H1 (cell line): ENCODE measurements at regions of chr6 and their contacts with region 1.

Region 1: DNA sequence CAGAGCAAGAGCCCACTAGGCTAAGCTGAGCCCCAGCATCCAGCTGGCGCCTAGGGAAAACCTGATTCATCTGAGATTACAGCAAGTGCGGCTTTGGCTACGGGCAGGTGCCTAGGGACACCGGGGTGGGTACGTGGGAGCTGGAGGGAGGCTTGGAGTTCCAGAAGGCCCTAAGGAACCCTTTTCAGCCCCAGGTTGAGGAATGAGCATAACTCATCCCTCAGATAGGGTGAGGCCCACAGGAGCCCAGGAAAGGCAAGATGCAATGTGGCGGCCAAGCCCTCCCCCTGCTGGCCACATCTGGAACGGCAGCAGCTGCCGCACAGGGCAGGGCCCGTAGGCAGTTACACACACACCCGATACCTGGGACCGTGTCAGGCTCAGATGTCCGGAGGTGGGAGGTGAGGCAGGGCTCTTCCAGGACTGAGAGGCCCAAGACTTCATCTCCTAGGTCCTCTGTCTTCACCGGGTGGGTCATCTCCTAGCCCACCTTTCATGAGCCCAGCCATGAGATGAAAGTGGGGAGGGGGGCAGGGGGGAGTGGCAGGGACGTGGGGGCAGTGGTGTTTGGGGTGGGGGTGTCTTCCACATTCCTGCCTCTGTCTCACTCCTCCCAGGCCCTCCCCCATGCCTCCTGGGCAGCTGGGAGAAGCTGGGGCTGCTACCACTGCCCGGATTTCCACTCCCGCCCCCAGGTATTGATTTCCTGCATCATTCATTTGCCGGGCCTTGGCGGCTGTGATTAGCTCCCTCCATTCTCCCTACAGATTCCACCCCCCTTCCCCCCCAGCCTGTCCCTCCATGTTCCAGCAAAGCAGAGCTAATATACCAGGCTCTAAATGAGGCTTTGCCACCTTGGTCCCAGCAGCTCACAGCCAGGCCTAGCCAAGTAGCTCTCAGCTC is 5.5 kb downstream of the MDGA1 start:
- DNase-seq: peak; percentile 69 to 96
- H3K4me3 ChIP-seq: no peak overlapping the region
- H3K27ac ChIP-seq: no peak overlapping the region
- H3K4me1 ChIP-seq: peaks cover 2 to 14% (median 10%) of the 10 kb centered on the region in 4 experiments; a peak in 6 of 7 replicates
- H3K27me3 ChIP-seq: peaks cover 42 to 49% (median 48%) of the 10 kb centered on the region in 4 experiments
- CTCF ChIP-seq: peak in 2 of 3 experiments; percentile 97 to 99; a peak in 3 of 4 replicates
- EP300 ChIP-seq: no peak
- POLR2A ChIP-seq: no peak
- RAD21 ChIP-seq: peak; percentile 99 to 100

Region 2: GRCh38 chr6:37483917-37484785 is 208.0 kb before region 1 on chr6:
- CTCF ChIA-PET with region 1: interaction called, 13 read pairs
- POLR2A ChIA-PET with region 1: interaction called, 3 read pairs
- DNase-seq: peak; percentile 23 to 93
- H3K4me3 ChIP-seq: no peak overlapping the region
- H3K27ac ChIP-seq: no peak overlapping the region
- H3K4me1 ChIP-seq: peaks cover 0 to 15% (median 4%) of the 10 kb centered on the region in 4 experiments; a peak in 5 of 7 replicates
- H3K27me3 ChIP-seq: no peaks in the 10 kb centered on the region
- CTCF ChIP-seq: peak in 2 of 3 experiments; percentile 91 to 97; a peak in 3 of 4 replicates
- EP300 ChIP-seq: no peak
- POLR2A ChIP-seq: no peak
- RAD21 ChIP-seq: peak; percentile 97 to 98

Region 3: GRCh38 chr6:37538107-37538506 is 154.0 kb before region 1 on chr6:
- CTCF ChIA-PET with region 1: interaction called, 32 read pairs
- POLR2A ChIA-PET with region 1: interaction called, 4 read pairs
- DNase-seq: peak in 1 of 2 experiments; percentile 71
- H3K4me3 ChIP-seq: no peak overlapping the region
- H3K27ac ChIP-seq: no peak overlapping the region
- H3K4me1 ChIP-seq: peaks cover 0 to 16% (median 7%) of the 10 kb centered on the region in 4 experiments; a peak in 5 of 7 replicates
- H3K27me3 ChIP-seq: peaks cover 23 to 52% (median 42%) of the 10 kb centered on the region in 4 experiments
- CTCF ChIP-seq: peak; percentile 72 to 85 (median 80)
- EP300 ChIP-seq: no peak
- POLR2A ChIP-seq: no peak
- RAD21 ChIP-seq: peak; percentile 71 to 80

Region 4: DNA sequence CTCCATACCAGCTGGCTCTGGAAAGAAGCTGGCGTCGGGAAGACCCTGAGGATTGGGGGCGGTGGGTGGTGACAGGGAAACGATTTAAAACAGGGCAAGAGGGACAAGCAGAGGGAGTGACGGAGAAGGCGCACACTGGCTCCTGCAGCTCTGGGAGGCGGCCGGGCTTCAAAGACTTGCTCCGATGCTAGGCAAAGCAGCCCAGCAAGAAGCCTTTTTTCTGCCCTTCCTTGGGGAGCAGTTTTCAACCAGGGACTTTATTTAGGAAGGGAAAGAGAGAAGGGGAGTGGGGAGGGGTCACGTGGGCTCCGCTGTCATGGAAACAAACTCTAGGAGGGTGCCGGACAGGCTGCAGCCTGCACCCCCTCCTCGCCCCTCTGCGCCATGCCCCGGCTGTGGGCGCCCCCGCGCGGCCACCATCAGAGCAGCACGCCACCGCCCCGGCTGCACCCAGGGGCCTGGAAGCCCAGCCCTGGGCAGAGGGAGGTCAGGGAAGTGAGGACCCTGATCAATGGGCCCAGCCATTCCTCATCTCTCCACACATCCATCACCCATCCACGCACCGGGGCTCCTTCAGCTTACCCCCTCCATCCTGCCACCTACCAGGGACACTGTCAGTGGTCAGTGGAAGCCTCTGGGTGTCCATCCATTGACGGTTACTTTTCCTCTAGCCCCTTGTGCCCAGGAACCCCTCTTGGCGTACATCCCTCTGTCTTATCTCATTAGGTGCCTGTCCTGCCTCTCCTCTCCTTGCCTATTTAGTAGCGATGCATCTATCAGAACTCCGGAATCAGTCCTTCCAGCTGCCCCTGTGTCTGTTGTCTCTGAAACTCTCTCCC is 125.8 kb before region 1 on chr6:
- CTCF ChIA-PET with region 1: interaction called, 25 read pairs
- POLR2A ChIA-PET with region 1: no interaction called
- DNase-seq: peak in 1 of 2 experiments; percentile 95
- H3K4me3 ChIP-seq: peak overlapping the region; percentile 21 to 71 (median 54)
- H3K27ac ChIP-seq: no peak overlapping the region
- H3K4me1 ChIP-seq: peaks cover 2 to 13% (median 5%) of the 10 kb centered on the region in 4 experiments; a peak in 6 of 7 replicates
- H3K27me3 ChIP-seq: no peaks in the 10 kb centered on the region; a peak in 2 of 7 replicates
- CTCF ChIP-seq: peak; percentile 84 to 93 (median 91)
- EP300 ChIP-seq: 0 out of 3 replicates have a peak, but pooled peaks of 1 of the 2 experiments have one; percentile 30
- POLR2A ChIP-seq: no peak
- RAD21 ChIP-seq: peak; percentile 89

Region 5: GRCh38 chr6:37618916-37619590 is 73.1 kb before region 1 on chr6:
- CTCF ChIA-PET with region 1: interaction called, 17 read pairs
- POLR2A ChIA-PET with region 1: no interaction called
- DNase-seq: no peak
- H3K4me3 ChIP-seq: no peak overlapping the region
- H3K27ac ChIP-seq: no peak overlapping the region
- H3K4me1 ChIP-seq: peaks cover 0 to 3% (median under 1%) of the 10 kb centered on the region in 4 experiments; a peak in 3 of 7 replicates
- H3K27me3 ChIP-seq: no peaks in the 10 kb centered on the region; a peak in 1 of 7 replicates
- CTCF ChIP-seq: no peak
- EP300 ChIP-seq: no peak
- POLR2A ChIP-seq: no peak
- RAD21 ChIP-seq: no peak

Region 6: GRCh38 chr6:37653933-37654565 is 38.1 kb before region 1 on chr6:
- CTCF ChIA-PET with region 1: interaction called, 28 read pairs
- POLR2A ChIA-PET with region 1: interaction called, 4 read pairs
- DNase-seq: peak; percentile 15 to 81
- H3K4me3 ChIP-seq: no peak overlapping the region
- H3K27ac ChIP-seq: no peak overlapping the region
- H3K4me1 ChIP-seq: peaks cover 0 to 6% (median 1%) of the 10 kb centered on the region in 4 experiments; a peak in 3 of 7 replicates
- H3K27me3 ChIP-seq: peaks cover 3 to 21% (median 16%) of the 10 kb centered on the region in 4 experiments
- CTCF ChIP-seq: peak in 2 of 3 experiments; percentile 62 to 86; a peak in 3 of 4 replicates
- EP300 ChIP-seq: no peak
- POLR2A ChIP-seq: no peak
- RAD21 ChIP-seq: peak; percentile 25 to 36; a peak in 2 of 4 replicates

Region 7: GRCh38 chr6:37679539-37680476 is 12.3 kb before region 1 on chr6:
- CTCF ChIA-PET with region 1: interaction called, 15 read pairs
- POLR2A ChIA-PET with region 1: no interaction called
- DNase-seq: no peak
- H3K4me3 ChIP-seq: no peak overlapping the region
- H3K27ac ChIP-seq: no peak overlapping the region
- H3K4me1 ChIP-seq: peaks cover 0 to 8% (median 3%) of the 10 kb centered on the region in 4 experiments; a peak in 4 of 7 replicates
- H3K27me3 ChIP-seq: no peaks in the 10 kb centered on the region; a peak in 1 of 7 replicates
- CTCF ChIP-seq: no peak
- EP300 ChIP-seq: no peak
- POLR2A ChIP-seq: no peak
- RAD21 ChIP-seq: no peak